ENCODE measurements at regions of chr2 and their contacts with region 1.

Region 1: DNA sequence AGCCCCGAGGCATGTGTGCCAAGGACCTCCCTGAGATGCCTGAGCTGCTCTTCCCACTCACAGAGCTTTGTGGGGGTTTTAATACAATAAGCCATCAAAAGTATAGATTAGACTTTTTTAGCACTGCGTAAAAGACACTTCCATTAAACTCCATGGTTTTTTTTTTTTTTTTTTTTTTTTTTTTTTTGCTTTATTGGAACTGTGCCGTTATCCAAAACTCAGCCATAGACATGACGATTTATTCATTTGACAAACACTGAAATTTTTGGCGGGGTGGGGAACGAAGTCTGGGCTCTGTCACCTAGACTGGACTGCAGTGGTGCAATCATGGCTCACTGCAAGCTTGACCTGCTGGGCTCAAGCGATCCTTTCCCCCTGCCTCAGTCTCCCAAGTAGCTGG is 18.4 kb downstream of the NPPC start:
- DNase-seq: no peak
- H3K4me3 ChIP-seq: no peak overlapping the region
- H3K27ac ChIP-seq: no peak overlapping the region
- H3K4me1 ChIP-seq: no peaks in the 10 kb centered on the region
- H3K27me3 ChIP-seq: no peaks in the 10 kb centered on the region
- CTCF ChIP-seq: no peak
- POLR2A ChIP-seq: no peak

Region 2: DNA sequence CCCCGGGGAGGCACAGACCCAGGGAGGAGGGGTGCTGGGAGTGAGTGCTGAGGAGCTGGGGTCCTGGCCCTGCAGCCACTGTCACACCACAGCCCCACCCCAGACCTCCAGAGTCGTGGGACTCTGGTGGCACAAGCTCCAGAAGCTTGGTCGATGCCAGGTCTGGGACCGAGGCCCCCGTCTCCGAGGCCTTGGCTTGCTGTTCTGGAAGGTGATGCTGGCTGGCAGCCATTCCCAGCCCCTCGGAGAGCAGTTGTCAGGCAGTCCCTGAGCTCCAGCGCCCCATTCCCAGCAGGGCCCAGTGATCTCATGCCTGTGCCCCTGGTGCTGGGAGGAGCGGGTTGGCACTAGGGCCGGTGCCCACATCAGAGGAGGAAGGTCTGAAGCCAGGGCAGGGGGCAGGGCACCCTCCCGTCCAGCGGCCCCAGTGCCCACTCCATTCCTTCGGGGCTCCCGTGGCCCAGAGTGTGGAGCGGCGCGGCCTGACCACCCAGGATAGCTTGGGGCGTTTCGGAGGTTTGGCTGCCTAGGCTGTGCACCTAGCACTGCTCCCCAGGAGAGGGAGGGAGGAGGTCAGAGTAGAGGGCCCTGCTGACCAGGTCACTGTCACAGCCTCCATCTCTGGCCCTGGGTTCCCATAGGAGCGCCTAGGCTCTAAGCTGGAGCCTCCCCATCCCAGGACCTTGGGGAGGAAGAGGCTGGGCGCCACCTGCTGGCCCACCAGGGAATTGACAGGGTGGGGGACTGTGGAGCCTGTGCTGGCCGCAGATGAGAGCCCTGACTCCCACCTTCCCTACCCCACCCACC is 531.4 kb after region 1 on chr2:
- intact Hi-C with region 1: loop called (anchors 2 kb)
- DNase-seq: no peak
- H3K4me3 ChIP-seq: no peak overlapping the region
- H3K27ac ChIP-seq: no peak overlapping the region
- H3K4me1 ChIP-seq: no peaks in the 10 kb centered on the region
- H3K27me3 ChIP-seq: no peaks in the 10 kb centered on the region
- CTCF ChIP-seq: peak in 3 of 4 experiments; percentile 4 to 30 (median 9)
- POLR2A ChIP-seq: no peak

Measured in uterus (tissue), 4 donors.